ENCODE measurements at regions of chr15 and their contacts with region 1.

Region 1: DNA sequence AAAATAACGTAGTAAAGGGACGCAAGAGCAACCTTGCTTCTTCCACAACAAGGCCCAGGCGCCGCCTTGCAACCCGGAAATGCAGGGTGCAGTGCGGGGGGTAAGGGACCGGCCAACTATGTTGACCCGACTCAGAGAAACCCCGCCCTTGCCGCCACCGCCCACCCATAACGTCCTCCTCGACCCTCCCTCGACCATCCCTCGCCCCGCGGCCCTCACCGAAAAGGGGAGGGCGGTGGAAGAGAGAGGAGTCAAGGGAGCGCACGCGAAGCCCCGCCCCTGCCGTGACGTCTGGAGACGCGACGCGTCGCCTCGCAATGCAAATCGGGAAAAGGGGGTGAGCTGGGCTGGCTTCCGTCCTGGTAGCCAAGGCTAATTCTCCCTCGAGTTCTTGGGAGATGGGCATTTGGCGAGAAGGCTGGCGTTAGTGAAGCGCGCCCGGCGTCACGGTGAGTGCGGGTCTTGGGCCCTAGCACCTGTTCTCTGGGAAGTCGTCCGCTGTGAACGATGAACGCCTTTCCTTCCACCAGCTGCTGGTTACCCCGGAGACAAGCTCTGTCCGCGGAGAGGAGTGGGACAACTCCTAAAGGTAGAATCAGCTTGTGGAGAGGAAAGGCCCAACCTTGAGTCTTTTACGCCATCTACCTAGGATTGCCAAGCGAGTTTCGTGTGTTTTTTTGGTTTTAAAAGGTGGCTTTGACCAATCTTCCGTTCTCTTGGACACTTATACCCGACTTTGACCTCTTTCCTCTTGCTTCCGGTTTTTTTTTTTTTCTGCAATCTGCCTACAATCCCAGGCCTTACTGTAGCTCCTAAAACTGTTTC is at the start of gene USP8:
- DNase-seq: peak; percentile 84 to 96 (median 89)
- ATAC-seq: peak; percentile 97
- H3K4me3 ChIP-seq: peak within 1 kb of the TSS; percentile 87
- H3K4me3 Mint-ChIP-seq: peak within 1 kb of the TSS; percentile 97
- H3K27ac ChIP-seq: peak within 1 kb of the TSS; percentile 86 to 96
- H3K27ac Mint-ChIP-seq: peak within 1 kb of the TSS; percentile 93
- H3K4me1 ChIP-seq: peaks cover 34% of the 10 kb centered on the region
- H3K4me1 Mint-ChIP-seq: peaks cover 45% of the 10 kb centered on the region
- H3K27me3 ChIP-seq: no peaks in the 10 kb centered on the region
- H3K27me3 Mint-ChIP-seq: no peaks in the 10 kb centered on the region
- CTCF ChIP-seq: no peak
- total RNA-seq, gene USP8: 48.9 to 50.0 TPM

Region 2: GRCh38 chr15:48810414-48811317 is 1613.6 kb before region 1 on chr15 and contains the start of gene CEP152:
- CTCF ChIA-PET with region 1: no interaction called
- POLR2A ChIA-PET with region 1: no interaction called
- intact Hi-C with region 1: loop called in 1 of 2 experiments (anchors 5 kb)
- DNase-seq: peak; percentile 95 to 99 (median 98)
- ATAC-seq: peak; percentile 96
- H3K4me3 ChIP-seq: peak within 1 kb of the TSS; percentile 95
- H3K4me3 Mint-ChIP-seq: peak within 1 kb of the TSS; percentile 85
- H3K27ac ChIP-seq: peak within 1 kb of the TSS in 1 of 2 donors; percentile 43
- H3K27ac Mint-ChIP-seq: peak within 1 kb of the TSS; percentile 74
- H3K4me1 ChIP-seq: peaks cover 17% of the 10 kb centered on the region
- H3K4me1 Mint-ChIP-seq: peaks cover 41% of the 10 kb centered on the region
- H3K27me3 ChIP-seq: no peaks in the 10 kb centered on the region
- H3K27me3 Mint-ChIP-seq: no peaks in the 10 kb centered on the region
- CTCF ChIP-seq: no peak
- total RNA-seq, gene CEP152: 5.2 to 6.3 TPM

Region 3: DNA sequence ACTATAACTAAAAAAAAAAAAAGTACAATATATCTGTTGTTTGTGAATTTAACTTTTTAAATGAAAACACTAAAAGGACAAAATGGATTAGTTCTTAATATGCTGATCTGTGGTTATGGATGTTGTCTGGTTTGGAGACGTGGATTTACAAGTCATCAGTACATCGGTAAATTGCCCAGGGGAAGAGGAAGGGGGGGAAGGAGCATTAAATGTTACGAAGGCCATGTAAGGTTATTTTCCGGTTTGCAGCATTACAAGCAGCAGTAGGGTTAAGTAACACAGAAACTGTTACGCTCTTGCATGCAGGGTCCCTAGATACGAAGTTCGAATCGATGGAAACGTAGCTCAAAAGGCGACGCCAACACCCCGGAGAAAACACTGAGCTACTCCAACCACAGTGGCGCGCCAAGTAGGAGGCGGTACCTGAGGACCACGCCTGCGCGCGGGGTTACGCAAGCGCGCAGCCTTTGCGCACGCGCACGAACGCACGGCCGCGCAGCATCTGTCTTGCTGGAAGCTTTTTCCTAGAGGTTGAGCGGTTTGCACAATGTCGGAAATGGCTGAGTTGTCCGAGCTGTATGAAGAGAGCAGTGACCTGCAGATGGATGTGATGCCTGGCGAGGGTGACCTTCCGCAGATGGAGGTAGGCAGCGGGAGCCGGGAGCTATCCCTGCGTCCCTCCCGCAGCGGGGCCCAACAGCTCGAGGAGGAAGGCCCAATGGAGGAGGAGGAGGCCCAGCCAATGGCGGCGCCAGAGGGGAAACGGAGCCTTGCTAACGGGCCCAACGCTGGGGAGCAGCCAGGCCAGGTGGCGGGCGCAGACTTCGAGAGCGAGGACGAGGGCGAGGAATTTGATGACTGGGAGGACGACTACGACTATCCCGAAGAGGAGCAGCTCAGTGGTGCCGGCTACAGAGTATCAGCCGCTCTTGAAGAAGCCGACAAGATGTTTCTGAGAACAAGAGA is 1546.4 kb before region 1 on chr15 and contains the start of gene EID1:
- CTCF ChIA-PET with region 1: no interaction called
- POLR2A ChIA-PET with region 1: interaction called, 6 read pairs
- intact Hi-C with region 1: loop called in 1 of 2 experiments (anchors 10 kb)
- DNase-seq: peak; percentile 84 to 98 (median 90)
- ATAC-seq: peak; percentile 93
- H3K4me3 ChIP-seq: peak within 1 kb of the TSS; percentile 92
- H3K4me3 Mint-ChIP-seq: peak within 1 kb of the TSS; percentile 94
- H3K27ac ChIP-seq: peak within 1 kb of the TSS; percentile 68 to 78
- H3K27ac Mint-ChIP-seq: peak within 1 kb of the TSS; percentile 95
- H3K4me1 ChIP-seq: peaks cover 7% of the 10 kb centered on the region
- H3K4me1 Mint-ChIP-seq: peaks cover 23% of the 10 kb centered on the region
- H3K27me3 ChIP-seq: no peaks in the 10 kb centered on the region
- H3K27me3 Mint-ChIP-seq: peaks cover 25% of the 10 kb centered on the region
- CTCF ChIP-seq: no peak
- total RNA-seq, gene EID1: 41.0 to 45.3 TPM

Region 4: DNA sequence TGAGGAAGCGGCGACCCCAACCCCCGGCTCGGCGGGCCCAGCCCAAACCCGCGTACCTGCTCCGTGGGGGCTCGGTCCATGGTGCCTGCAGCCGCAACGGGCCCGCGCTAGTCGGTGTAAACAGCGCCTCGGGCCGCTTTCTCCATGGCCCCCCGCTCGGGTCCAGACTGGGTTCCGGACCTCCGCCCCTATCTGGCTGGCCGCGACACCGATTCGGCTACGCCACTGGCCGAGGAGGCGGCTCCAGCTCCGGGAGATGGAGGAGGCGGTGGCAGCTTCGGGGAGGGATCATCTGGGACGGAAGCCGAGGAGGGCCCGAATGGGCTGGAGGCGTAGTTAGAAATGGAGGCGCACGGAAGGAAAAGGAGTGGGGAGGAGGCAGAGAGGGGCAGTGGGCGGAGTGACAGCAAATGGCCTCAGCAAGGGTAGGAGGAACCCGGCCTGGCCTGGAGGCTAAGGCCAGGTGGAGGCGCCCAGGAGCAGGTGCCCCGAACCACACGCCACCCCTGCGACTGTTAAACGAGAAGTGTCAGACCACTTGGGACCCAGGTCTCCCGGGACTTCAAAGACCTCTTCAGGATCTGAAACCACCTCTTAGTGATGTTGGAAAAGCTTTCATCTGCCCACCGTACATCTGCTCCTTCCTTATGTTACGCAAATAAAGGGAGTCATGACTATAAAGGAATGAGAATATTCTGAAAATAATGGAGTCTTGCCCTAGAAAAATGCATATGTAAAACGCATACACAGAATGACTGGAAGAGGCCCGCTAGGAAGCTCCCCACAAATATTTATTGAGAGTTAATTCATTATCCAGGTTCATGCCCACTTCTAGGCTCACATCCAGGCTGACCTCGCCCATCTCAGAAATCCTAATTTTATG is 1377.8 kb before region 1 on chr15 and contains the start of gene SECISBP2L:
- CTCF ChIA-PET with region 1: no interaction called
- POLR2A ChIA-PET with region 1: no interaction called
- intact Hi-C with region 1: loop called in 1 of 2 experiments (anchors 10 kb)
- DNase-seq: peak; percentile 79 to 95 (median 84)
- ATAC-seq: peak; percentile 95
- H3K4me3 ChIP-seq: peak within 1 kb of the TSS; percentile 66
- H3K4me3 Mint-ChIP-seq: peak within 1 kb of the TSS; percentile 98
- H3K27ac ChIP-seq: peak within 1 kb of the TSS; percentile 5 to 52
- H3K27ac Mint-ChIP-seq: peak within 1 kb of the TSS; percentile 92
- H3K4me1 ChIP-seq: peaks cover 11% of the 10 kb centered on the region
- H3K4me1 Mint-ChIP-seq: peaks cover 42% of the 10 kb centered on the region
- H3K27me3 ChIP-seq: no peaks in the 10 kb centered on the region
- H3K27me3 Mint-ChIP-seq: no peaks in the 10 kb centered on the region
- CTCF ChIP-seq: no peak
- total RNA-seq, gene SECISBP2L: 55.9 to 56.0 TPM

Region 5: GRCh38 chr15:50765195-50765973 is 341.1 kb after region 1 on chr15 and contains the start of gene SPPL2A:
- CTCF ChIA-PET with region 1: no interaction called
- POLR2A ChIA-PET with region 1: no interaction called
- intact Hi-C with region 1: loop called in 1 of 2 experiments (anchors 5 kb)
- DNase-seq: peak; percentile 47 to 88 (median 69)
- ATAC-seq: peak; percentile 89
- H3K4me3 ChIP-seq: peak within 1 kb of the TSS; percentile 72
- H3K4me3 Mint-ChIP-seq: peak within 1 kb of the TSS; percentile 94
- H3K27ac ChIP-seq: peak within 1 kb of the TSS; percentile 82 to 88
- H3K27ac Mint-ChIP-seq: peak within 1 kb of the TSS; percentile 84
- H3K4me1 ChIP-seq: peaks cover 25% of the 10 kb centered on the region
- H3K4me1 Mint-ChIP-seq: peaks cover 44% of the 10 kb centered on the region
- H3K27me3 ChIP-seq: no peaks in the 10 kb centered on the region
- H3K27me3 Mint-ChIP-seq: no peaks in the 10 kb centered on the region
- CTCF ChIP-seq: no peak
- total RNA-seq, gene SPPL2A: 26.6 to 30.7 TPM

Region 6: DNA sequence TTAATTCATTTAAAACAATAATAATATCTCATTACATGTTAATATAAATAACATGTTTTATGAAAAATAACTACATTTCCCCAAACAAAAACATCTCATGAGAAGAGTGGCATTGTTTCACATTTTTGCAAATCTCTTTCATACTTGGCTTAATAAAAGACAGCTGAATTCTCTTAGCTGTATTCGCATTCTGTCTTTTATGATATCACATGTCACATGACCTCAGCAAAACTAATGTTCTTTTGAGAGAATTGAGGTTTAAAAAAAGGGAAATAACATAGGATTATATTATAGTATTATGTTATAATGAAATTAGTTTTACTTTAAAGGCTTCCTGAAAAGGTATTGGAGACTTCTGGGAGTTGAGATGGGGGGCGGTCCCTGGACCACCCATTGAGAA is 389.6 kb after region 1 on chr15:
- CTCF ChIA-PET with region 1: no interaction called
- POLR2A ChIA-PET with region 1: no interaction called
- intact Hi-C with region 1: no loop called
- DNase-seq: no peak
- ATAC-seq: no peak
- H3K4me3 ChIP-seq: no peak overlapping the region
- H3K4me3 Mint-ChIP-seq: no peak overlapping the region
- H3K27ac ChIP-seq: no peak overlapping the region
- H3K27ac Mint-ChIP-seq: no peak overlapping the region
- H3K4me1 ChIP-seq: no peaks in the 10 kb centered on the region
- H3K4me1 Mint-ChIP-seq: no peaks in the 10 kb centered on the region
- H3K27me3 ChIP-seq: no peaks in the 10 kb centered on the region
- H3K27me3 Mint-ChIP-seq: peaks cover 5% of the 10 kb centered on the region
- CTCF ChIP-seq: no peak

Region 7: DNA sequence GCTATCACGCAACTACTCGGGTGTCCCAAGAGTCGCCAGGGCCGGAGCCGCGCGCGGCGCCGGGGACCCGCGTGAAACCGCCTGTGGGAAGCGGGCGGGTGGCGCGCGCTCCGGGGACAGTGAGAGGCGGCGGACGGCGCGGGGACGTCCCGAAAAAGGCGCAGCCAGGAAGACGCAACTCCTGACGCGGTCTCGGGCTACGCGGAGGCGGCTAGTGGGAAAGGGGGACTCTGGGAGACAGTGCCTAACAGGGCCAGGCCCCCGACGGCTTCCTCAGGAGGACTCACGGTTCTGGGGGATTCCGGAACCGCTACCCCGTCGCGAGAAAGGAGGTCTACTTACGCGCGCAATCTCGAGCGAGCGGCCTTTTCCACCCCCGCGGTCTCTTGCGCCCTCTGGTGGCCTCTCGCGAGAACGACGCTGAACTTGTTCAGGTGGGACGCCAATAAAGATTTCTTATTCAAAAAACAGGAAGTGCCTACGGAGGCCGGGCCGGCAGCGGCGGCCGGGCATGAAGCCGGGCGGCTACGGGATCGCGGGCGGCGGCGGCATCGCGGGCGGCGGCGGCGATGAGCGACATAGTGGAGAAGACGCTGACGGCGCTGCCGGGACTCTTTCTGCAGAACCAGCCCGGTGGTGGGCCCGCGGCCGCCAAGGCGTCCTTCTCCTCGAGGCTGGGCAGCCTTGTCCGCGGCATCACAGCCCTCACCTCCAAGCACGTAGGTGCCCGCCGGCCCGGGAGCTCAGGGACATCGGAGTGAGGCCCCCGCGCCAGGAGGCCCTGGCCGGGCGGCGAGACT is 484.1 kb after region 1 on chr15 and contains the start of gene AP4E1:
- CTCF ChIA-PET with region 1: no interaction called
- POLR2A ChIA-PET with region 1: interaction called, 4 read pairs
- intact Hi-C with region 1: loop called in 1 of 2 experiments (anchors 5 kb)
- DNase-seq: peak; percentile 89 to 97 (median 93)
- ATAC-seq: peak; percentile 40
- H3K4me3 ChIP-seq: peak within 1 kb of the TSS; percentile 80
- H3K4me3 Mint-ChIP-seq: peak within 1 kb of the TSS; percentile 94
- H3K27ac ChIP-seq: peak within 1 kb of the TSS; percentile 91 to 100
- H3K27ac Mint-ChIP-seq: peak within 1 kb of the TSS; percentile 98
- H3K4me1 ChIP-seq: peaks cover 19% of the 10 kb centered on the region
- H3K4me1 Mint-ChIP-seq: peaks cover 29% of the 10 kb centered on the region
- H3K27me3 ChIP-seq: no peaks in the 10 kb centered on the region
- H3K27me3 Mint-ChIP-seq: no peaks in the 10 kb centered on the region
- CTCF ChIP-seq: peak; percentile 87
- total RNA-seq, gene AP4E1: 6.3 to 6.6 TPM

Measured in CD4-positive, alpha-beta T cell (primary cell).